ENCODE measurements at regions of chr1 and their contacts with region 1.

Region 1: DNA sequence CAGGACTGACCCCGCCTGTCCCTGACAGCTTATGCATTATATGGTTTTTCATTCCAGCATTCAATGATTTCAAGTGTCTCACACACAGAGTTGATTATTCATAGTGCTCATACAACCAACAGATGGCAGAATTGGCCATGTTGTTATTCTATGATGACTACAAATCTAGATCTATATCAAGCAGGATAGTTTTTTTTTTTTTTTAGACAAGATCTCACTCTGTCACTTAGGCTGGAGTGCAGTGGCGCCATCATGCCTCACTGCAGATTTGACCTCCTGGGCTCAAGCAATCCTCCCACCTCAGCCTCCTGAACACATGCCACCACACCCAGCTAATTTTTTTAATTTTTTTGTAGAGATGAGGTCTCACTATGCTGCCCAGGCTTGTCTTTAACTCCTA is 40.1 kb upstream of the LRRC8D start:
- DNase-seq: no peak
- H3K4me3 Mint-ChIP-seq: peak overlapping the region; percentile 56
- H3K27ac Mint-ChIP-seq: peak overlapping the region; percentile 96
- H3K4me1 Mint-ChIP-seq: peaks cover 38% of the 10 kb centered on the region
- H3K27me3 Mint-ChIP-seq: no peaks in the 10 kb centered on the region

Region 2: DNA sequence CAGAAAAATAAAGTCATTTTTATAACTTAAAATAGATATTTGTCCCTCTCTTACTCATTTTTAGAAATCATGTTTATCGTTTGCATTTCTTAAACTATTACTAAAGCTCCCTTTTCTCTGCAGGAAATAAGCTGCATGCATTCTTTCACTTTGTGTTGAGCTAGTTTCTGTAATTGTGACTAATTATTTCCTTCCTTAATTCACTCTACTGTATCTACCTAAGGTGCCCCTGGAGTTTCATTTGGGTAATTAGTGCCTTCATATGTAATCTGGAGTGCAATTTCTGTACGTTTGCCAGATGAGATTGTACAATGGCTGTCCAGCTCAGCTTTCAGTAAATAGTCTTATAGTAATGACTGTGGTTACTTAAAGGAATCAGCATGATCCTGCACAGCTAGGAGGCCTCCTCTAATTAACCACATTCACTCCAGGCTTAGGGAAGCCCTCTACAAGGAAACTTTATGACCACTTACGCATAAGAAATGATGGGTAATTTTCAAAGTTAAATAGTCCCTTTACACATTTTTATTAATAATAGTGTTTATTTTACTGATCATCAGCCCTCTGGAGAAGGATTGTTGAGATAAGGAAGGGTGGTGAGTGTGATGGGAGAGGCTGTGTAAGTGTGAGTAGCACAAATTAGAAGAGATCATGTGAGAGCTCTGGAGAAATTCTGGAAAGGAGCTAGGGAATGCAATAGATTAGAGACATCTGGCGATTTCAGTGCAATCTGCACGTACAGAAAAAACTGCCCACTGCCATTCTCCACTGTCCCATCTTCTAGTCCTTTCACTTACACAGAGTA is 61.0 kb before region 1 on chr1:
- intact Hi-C with region 1: no loop called
- DNase-seq: no peak
- H3K4me3 Mint-ChIP-seq: peak overlapping the region; percentile 75
- H3K27ac Mint-ChIP-seq: peak overlapping the region; percentile 99
- H3K4me1 Mint-ChIP-seq: peaks cover 82% of the 10 kb centered on the region
- H3K27me3 Mint-ChIP-seq: no peaks in the 10 kb centered on the region

Region 3: GRCh38 chr1:89804642-89805237 is 24.0 kb after region 1 on chr1:
- intact Hi-C with region 1: loop called (anchors 2 kb)
- DNase-seq: peak; percentile 74
- H3K4me3 Mint-ChIP-seq: no peak overlapping the region
- H3K27ac Mint-ChIP-seq: no peak overlapping the region
- H3K4me1 Mint-ChIP-seq: peaks cover 6% of the 10 kb centered on the region
- H3K27me3 Mint-ChIP-seq: peaks cover 6% of the 10 kb centered on the region

Region 4: GRCh38 chr1:89820422-89821321 is 40.0 kb after region 1 on chr1 and contains the start of gene LRRC8D:
- intact Hi-C with region 1: loop called (anchors 2 kb)
- DNase-seq: peak; percentile 66
- H3K4me3 Mint-ChIP-seq: peak within 1 kb of the TSS; percentile 84
- H3K27ac Mint-ChIP-seq: peak within 1 kb of the TSS; percentile 66
- H3K4me1 Mint-ChIP-seq: peaks cover 23% of the 10 kb centered on the region
- H3K27me3 Mint-ChIP-seq: peaks cover 13% of the 10 kb centered on the region
- total RNA-seq, gene LRRC8D: 28.6 and 33.3 TPM in 2 replicates

Region 5: GRCh38 chr1:89980605-89981004 is 199.9 kb after region 1 on chr1:
- intact Hi-C with region 1: no loop called
- DNase-seq: no peak
- H3K4me3 Mint-ChIP-seq: no peak overlapping the region
- H3K27ac Mint-ChIP-seq: no peak overlapping the region
- H3K4me1 Mint-ChIP-seq: peaks cover 2% of the 10 kb centered on the region
- H3K27me3 Mint-ChIP-seq: peaks cover 9% of the 10 kb centered on the region

Measured in activated T-helper 2 cell treated with anti-CD3 and anti-CD28 coated beads, Interferon-gamma antibody, Interleukin-2, Interleukin-4, amounts not matched to agents 10 μg/mL and 5 μg/mL and 100 μg/mL, durations not matched to agents 14 hours and 24 hours and 36 hours (primary cell).